Posterior cingulate gyrus (tissue), 11 donors: ENCODE measurements at regions of chr9 and their contacts with region 1.

Region 1: GRCh38 chr9:137114610-137115391 is at the start of gene DPP7:
- DNase-seq: peak; percentile 61 to 97 (median 78)

Region 2: DNA sequence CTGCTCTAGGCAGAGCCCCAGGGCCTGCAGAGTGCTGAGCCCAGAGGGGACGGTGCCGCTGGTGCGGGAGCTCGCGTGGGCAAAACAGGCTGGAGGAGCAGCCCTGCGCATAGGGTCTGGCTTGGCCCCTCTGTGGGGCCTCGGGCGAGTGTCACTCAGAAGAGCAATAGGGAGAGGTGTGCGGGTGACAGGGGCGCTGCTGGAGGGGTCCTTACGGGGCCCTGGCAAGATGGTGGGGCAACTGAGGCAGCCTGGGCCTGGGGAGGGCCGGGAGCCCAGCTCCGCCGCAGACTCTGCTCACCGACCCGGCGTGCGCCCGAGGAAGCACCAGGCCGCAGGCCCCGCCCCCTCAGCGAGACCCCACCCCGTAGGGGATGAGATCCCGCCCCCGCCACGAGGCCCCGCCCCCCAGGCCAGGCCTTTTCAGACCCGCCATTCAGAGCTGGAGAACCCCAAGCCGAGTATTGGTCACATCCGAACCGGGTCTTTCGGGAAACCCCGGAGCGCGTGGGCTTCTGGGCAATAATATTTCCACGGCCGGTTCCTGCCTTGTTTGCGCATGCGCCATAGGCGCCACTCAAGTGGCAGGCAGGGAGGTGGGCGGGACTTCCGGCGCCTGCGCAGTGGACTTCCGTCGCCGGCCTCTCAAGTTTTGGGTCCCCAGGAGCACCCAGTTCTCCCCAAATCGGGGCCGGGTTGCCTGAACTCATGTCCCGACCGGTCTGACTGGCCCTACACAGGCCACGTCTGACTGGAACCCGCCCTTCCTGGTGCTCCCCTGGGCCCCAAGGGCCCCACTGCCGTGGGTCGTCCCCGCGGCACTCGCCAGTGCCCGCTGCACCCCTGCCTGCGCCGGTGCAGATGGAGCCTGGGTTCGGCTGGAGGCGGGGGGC is 108.5 kb after region 1 on chr9:
- intact Hi-C with region 1: loop called (anchors 2 kb)
- DNase-seq: peak; percentile 92 to 99 (median 96)